Uterus (tissue), 4 donors: ENCODE measurements at regions of chr14 and their contacts with region 1.

Region 1: DNA sequence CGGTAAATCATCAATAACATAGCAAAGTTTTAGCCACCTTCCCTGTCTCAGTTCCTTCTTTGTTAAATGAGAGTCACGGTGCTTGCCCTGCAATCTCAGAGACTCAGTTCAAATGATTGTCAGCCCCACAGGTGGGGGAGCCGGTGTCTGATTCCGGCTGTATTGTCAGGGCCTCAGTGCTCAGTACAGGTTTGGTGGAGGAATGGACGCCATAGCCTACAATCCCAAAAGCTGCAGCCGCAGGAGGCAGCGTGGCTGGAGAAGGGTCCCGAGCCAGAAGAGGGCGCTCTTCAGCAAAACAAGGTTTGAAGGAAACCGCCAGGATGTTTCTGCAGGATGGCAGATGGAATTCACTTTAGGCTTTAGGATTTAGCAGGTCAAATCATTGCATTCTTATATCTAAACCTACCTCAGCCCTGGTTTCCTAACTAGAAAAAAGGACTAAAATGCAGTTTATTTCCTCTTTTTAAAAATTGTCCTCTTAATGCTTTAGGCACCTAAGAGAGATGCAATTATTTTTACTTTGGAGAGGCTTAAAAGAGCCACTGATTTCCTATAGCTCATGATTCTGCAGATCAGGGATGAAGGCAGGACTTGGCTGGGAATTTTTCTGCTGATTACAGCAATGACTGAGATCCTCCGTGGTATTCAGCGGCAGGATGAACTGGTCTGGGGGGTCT is 29.2 kb downstream of the FOS start:
- DNase-seq: peak; percentile 86
- H3K4me3 ChIP-seq: no peak overlapping the region
- H3K27ac ChIP-seq: no peak overlapping the region
- H3K4me1 ChIP-seq: peaks cover 5 to 7% of the 10 kb centered on the region in 2 donors
- H3K27me3 ChIP-seq: no peaks in the 10 kb centered on the region
- CTCF ChIP-seq: peak; percentile 90 to 91 (median 91)
- POLR2A ChIP-seq: no peak

Region 2: DNA sequence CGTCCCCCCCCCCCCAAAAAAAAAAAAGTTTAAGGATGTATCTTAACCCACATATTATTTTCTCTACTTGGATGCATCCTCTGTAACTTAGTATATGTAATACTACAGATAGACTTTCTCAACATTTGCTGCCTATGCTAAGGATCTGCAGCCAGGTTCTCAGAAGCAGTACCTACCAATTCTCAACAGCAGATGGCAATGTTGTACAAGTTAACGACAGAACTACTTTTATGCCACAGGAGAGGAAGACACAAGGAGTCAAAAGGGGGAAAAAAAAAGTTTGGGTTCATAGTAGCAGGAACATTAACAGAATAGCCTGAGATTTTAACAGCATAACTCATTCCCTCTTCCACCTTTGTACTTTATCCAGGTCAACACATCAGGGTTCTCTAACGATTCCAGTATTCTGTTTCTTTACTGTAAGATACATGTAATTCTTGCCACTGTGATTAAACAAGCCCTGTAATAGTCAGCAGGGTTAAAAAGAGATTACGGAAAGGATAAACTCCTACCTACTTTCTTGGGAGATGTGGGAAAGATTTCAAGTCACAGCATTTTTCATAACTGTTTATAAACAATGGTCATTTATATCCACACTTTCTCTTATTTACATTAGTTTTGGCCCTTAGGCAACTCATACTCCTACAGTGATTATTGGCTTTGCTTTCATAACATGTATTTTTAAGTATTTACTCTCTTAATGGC is 175.3 kb before region 1 on chr14:
- intact Hi-C with region 1: loop called (anchors 5 kb)
- DNase-seq: peak; percentile 30 to 69
- H3K4me3 ChIP-seq: no peak overlapping the region
- H3K27ac ChIP-seq: peak overlapping the region in 1 of 2 donors; percentile 48
- H3K4me1 ChIP-seq: no peaks in the 10 kb centered on the region
- H3K27me3 ChIP-seq: no peaks in the 10 kb centered on the region
- CTCF ChIP-seq: peak; percentile 69 to 94 (median 82)
- POLR2A ChIP-seq: no peak

Region 3: GRCh38 chr14:75430526-75430925 is 122.7 kb after region 1 on chr14:
- intact Hi-C with region 1: no loop called
- DNase-seq: no peak
- H3K4me3 ChIP-seq: no peak overlapping the region
- H3K27ac ChIP-seq: peak overlapping the region; percentile 81
- H3K4me1 ChIP-seq: peaks cover 0 to 25% of the 10 kb centered on the region in 2 donors
- H3K27me3 ChIP-seq: no peaks in the 10 kb centered on the region
- CTCF ChIP-seq: no peak
- POLR2A ChIP-seq: no peak

Region 4: GRCh38 chr14:75487155-75487671 is 179.4 kb after region 1 on chr14:
- intact Hi-C with region 1: loop called (anchors 5 kb)
- DNase-seq: no peak
- H3K4me3 ChIP-seq: no peak overlapping the region
- H3K27ac ChIP-seq: no peak overlapping the region
- H3K4me1 ChIP-seq: no peaks in the 10 kb centered on the region
- H3K27me3 ChIP-seq: no peaks in the 10 kb centered on the region
- CTCF ChIP-seq: no peak
- POLR2A ChIP-seq: no peak